ENCODE measurements at regions of chr11 and their contacts with region 1.

Region 1: GRCh38 chr11:128884703-128885338 is 6.3 kb upstream of the KCNJ5 start:
- DNase-seq: peak; percentile 80
- H3K4me3 ChIP-seq: no peak overlapping the region
- H3K27ac ChIP-seq: no peak overlapping the region
- H3K4me1 ChIP-seq: no peaks in the 10 kb centered on the region
- H3K27me3 ChIP-seq: peaks cover 43 to 62% of the 10 kb centered on the region in 2 experiments
- CTCF ChIP-seq: peak; percentile 59 to 63
- POLR2A ChIP-seq: no peak

Region 2: GRCh38 chr11:128026596-128026995 is 858.2 kb before region 1 on chr11:
- CTCF ChIA-PET with region 1: no interaction called
- POLR2A ChIA-PET with region 1: no interaction called
- dilution Hi-C with region 1: no loop called
- intact Hi-C with region 1: loop called (anchors 1 kb)
- DNase-seq: peak; percentile 81
- H3K4me3 ChIP-seq: no peak overlapping the region
- H3K27ac ChIP-seq: peak overlapping the region; percentile 39
- H3K4me1 ChIP-seq: peaks cover 25% of the 10 kb centered on the region
- H3K27me3 ChIP-seq: no peaks in the 10 kb centered on the region
- CTCF ChIP-seq: no peak
- POLR2A ChIP-seq: no peak

Region 3: GRCh38 chr11:128669506-128670270 is 215.1 kb before region 1 on chr11:
- CTCF ChIA-PET with region 1: no interaction called
- POLR2A ChIA-PET with region 1: no interaction called
- dilution Hi-C with region 1: no loop called
- intact Hi-C with region 1: no loop called
- DNase-seq: peak; percentile 22
- H3K4me3 ChIP-seq: no peak overlapping the region
- H3K27ac ChIP-seq: no peak overlapping the region
- H3K4me1 ChIP-seq: no peaks in the 10 kb centered on the region
- H3K27me3 ChIP-seq: no peaks in the 10 kb centered on the region
- CTCF ChIP-seq: no peak
- POLR2A ChIP-seq: no peak

Region 4: GRCh38 chr11:128905345-128906184 is 20.7 kb after region 1 on chr11:
- CTCF ChIA-PET with region 1: interaction called, 141 read pairs
- POLR2A ChIA-PET with region 1: no interaction called
- dilution Hi-C with region 1: no loop called
- intact Hi-C with region 1: loop called (anchors 1 kb)
- DNase-seq: no peak
- H3K4me3 ChIP-seq: peak overlapping the region in 1 of 3 experiments; percentile 40
- H3K27ac ChIP-seq: no peak overlapping the region
- H3K4me1 ChIP-seq: peaks cover 17% of the 10 kb centered on the region
- H3K27me3 ChIP-seq: peaks cover 22 to 23% of the 10 kb centered on the region in 2 experiments
- CTCF ChIP-seq: peak; percentile 19 to 41
- POLR2A ChIP-seq: no peak

Region 5: DNA sequence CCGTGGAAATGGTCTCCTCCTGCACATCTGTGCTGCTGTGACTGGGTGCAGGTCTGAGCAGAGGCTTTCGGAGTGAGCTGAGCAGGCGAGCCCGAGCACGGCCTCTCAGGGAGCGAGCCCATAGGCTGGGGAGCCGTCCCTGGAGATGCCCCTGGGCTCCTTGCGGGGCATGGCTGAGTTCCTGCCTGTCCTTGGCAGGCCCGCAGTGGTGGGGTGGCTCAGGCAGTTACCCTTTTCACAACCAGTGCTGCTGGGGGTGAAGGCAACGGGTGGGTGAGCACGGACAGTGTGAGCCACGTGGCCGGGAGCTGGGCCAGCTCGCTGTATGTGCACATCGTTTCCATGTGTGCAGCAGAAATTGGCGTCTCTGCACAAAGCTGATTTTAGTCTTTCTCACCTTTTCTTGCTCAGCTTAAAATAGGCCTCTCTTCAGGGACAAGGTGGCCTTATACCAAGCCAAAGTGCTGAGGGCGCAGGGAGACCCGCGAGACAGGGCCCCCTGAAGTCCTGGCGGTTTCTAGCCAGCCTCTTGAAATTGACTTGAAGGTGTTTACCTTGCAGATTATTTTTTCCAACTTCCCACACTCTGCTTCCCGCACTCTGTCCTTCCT is 58.1 kb after region 1 on chr11 and contains the start of gene TP53AIP1:
- CTCF ChIA-PET with region 1: interaction called, 951 read pairs
- POLR2A ChIA-PET with region 1: no interaction called
- dilution Hi-C with region 1: no loop called
- intact Hi-C with region 1: no loop called
- DNase-seq: no peak
- H3K4me3 ChIP-seq: no peak within 1 kb of the TSS
- H3K27ac ChIP-seq: no peak within 1 kb of the TSS
- H3K4me1 ChIP-seq: no peaks in the 10 kb centered on the region
- H3K27me3 ChIP-seq: peaks cover 0 to 2% of the 10 kb centered on the region in 2 experiments
- CTCF ChIP-seq: no peak
- POLR2A ChIP-seq: no peak
- total RNA-seq, gene TP53AIP1: not detected in 2 replicates

Region 6: DNA sequence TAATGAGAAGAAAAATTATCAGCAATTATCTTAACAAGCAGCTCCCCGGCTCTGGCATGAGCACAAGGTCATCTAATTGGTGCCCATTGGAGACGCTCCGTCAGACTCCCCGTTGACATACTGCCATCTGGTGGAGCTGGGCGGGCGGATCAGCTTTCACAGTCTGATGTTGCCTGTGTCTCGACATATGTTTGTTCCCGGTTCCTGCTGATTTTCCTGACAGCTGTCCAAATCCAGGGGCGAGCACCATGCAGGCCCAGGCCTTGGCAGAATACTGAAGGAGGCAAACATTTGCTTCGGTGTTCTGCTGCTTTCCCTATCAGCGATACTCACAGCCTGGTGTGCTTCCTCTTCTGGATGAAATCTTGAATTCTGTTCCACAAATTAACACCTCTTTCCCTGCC is 447.1 kb after region 1 on chr11:
- CTCF ChIA-PET with region 1: interaction called, 88 read pairs
- POLR2A ChIA-PET with region 1: no interaction called
- dilution Hi-C with region 1: no loop called
- intact Hi-C with region 1: loop called (anchors 1 kb)
- DNase-seq: peak; percentile 76
- H3K4me3 ChIP-seq: no peak overlapping the region
- H3K27ac ChIP-seq: no peak overlapping the region
- H3K4me1 ChIP-seq: no peaks in the 10 kb centered on the region
- H3K27me3 ChIP-seq: no peaks in the 10 kb centered on the region
- CTCF ChIP-seq: peak; percentile 91 to 92
- POLR2A ChIP-seq: no peak